CD14-positive monocyte (primary cell): ENCODE measurements at regions of chr20 and their contacts with region 1.

Region 1: DNA sequence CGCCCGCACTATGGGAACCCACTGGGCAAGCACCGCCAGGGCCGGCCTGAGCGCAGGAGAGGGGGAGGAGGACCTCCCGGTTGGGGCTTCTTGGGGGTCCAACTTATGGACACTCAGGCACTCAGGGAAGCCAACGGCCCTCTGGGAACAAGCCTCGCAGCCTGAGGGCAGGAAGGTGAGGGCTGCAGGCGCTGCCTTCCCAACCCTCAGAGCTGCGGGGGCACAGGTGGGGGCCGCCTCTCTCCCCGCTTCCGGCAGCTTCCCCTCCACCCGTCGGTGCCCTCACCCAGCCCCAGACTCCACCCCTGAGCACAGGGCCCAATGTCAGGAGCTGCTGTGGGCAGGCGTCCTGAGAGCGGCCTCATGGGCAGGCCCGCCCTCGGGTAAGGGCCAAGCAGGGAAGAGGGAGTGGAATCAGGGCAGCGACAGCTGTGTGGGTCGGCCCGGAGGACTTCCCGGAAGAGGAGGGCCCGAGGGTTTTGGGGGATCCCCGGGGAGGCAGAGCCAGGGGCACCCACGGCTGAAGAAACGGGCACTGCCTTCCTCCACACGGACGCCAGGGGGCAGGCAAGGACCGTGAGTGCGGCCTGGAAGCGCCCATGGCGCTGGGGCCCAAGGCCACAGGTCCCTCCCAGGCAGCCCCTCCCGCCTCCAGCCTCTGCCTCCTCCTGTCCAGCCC is 488 bp upstream of the PTK6 start:
- DNase-seq: peak; percentile 96 to 98 (median 97)
- H3K4me3 ChIP-seq: peak overlapping the region; percentile 13 to 77 (median 41)
- H3K4me3 Mint-ChIP-seq: peak overlapping the region; percentile 65 to 84
- H3K27ac ChIP-seq: peak overlapping the region; percentile 89 to 90
- H3K27ac Mint-ChIP-seq: peak overlapping the region; percentile 82 to 93 (median 90)
- H3K4me1 ChIP-seq: peaks cover 23 to 28% of the 10 kb centered on the region in 2 donors
- H3K4me1 Mint-ChIP-seq: peaks cover 16% of the 10 kb centered on the region
- H3K27me3 ChIP-seq: peaks cover 0 to 18% of the 10 kb centered on the region in 2 donors
- H3K27me3 Mint-ChIP-seq: peaks cover 9 to 22% (median 13%) of the 10 kb centered on the region in 3 donors
- CTCF ChIP-seq: peak; percentile 96

Region 2: DNA sequence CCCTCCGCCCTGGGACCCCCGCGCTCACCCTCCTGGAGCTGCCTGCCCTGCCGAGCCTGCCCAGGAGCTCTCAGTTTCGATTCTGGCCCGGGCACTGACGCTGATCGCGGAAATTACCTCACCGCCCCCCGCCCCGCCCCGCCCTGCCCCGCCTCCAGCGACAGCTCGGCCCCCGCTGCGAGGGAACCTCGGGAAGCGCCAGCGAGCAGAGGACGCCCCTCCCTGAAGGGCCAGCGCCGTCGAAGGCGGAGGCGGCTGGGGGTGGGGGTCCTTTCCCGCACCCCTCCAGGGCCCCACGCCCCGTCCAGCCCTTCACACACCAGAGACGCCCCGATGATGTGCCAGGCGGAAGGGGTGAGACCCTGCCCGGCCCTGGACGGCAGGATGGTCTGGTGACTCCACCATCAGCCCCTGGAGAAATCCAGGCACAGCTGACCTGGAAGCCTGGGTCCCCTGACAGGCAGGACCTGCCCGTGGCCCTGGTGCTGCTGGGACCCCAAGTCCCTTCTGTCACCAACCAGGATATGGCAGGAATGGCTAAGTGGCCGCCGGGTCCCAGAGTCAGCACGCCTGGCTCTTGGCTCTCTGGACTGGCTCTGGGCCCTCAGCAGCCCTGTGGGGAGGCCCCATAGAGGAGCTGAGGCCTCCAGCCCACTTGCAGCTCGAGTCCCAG is 36.6 kb after region 1 on chr20 and contains the start of gene HELZ2:
- intact Hi-C with region 1: loop called in 1 of 2 experiments (anchors 5 kb)
- DNase-seq: peak; percentile 63 to 77 (median 69)
- H3K4me3 ChIP-seq: peak within 1 kb of the TSS; percentile 76 to 93 (median 92)
- H3K4me3 Mint-ChIP-seq: peak within 1 kb of the TSS; percentile 88 to 92
- H3K27ac ChIP-seq: peak within 1 kb of the TSS; percentile 31 to 80
- H3K27ac Mint-ChIP-seq: peak within 1 kb of the TSS; percentile 85 to 94 (median 87)
- H3K4me1 ChIP-seq: peaks cover 26 to 38% of the 10 kb centered on the region in 2 donors
- H3K4me1 Mint-ChIP-seq: peaks cover 17% of the 10 kb centered on the region
- H3K27me3 ChIP-seq: peaks cover 0 to 59% of the 10 kb centered on the region in 2 donors
- H3K27me3 Mint-ChIP-seq: peaks cover 35 to 79% (median 48%) of the 10 kb centered on the region in 3 donors
- CTCF ChIP-seq: no peak
- polyA plus RNA-seq, gene HELZ2: 3.0 to 15.5 (median 3.3) TPM

Region 3: DNA sequence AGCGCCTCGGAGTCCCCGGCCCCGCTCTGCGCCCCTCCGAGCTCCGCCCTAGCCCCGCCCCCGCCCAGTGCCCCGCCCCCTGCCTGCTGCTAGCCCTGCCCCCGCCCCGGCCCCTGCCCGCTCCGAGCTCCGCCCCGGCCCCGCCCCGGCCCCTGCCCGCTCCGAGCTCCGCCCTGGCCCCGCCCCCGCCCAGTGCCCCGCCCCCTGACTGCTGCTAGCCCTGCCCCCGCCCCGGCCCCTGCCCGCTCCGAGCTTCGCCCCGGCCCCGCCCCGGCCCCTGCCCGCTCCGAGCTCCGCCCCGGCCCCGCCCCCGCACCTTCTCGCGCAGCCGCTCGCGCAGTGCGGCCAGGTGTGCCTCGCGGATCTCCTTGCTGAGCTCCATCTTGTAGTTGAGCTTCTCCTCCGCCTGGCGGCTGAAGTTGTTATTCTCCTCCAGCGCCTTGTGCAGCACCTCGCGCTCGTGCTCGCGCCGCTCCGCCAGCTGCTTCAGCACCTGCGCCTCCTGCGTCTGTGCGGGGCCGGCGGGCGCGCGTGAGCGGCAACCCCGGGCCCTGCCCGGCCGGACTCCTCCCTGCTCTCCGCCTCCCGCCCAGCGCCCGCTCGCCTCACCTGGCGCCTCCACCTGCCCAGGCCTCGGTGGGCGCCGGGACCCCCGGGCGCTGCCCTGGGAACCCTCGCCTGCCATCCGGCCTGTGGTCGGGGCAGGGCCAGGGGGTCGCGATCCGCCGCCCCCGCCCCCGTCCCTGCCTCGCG is 104.3 kb after region 1 on chr20:
- intact Hi-C with region 1: loop called (anchors 1 to 5 kb)
- DNase-seq: peak; percentile 70 to 90 (median 76)
- H3K4me3 ChIP-seq: peak overlapping the region; percentile 74 to 93 (median 82)
- H3K4me3 Mint-ChIP-seq: peak overlapping the region; percentile 72 to 79
- H3K27ac ChIP-seq: peak overlapping the region; percentile 81 to 86
- H3K27ac Mint-ChIP-seq: peak overlapping the region in 5 of 7 donors; percentile 33 to 79 (median 63)
- H3K4me1 ChIP-seq: peaks cover 33 to 40% of the 10 kb centered on the region in 2 donors
- H3K4me1 Mint-ChIP-seq: peaks cover 33% of the 10 kb centered on the region
- H3K27me3 ChIP-seq: no peaks in the 10 kb centered on the region
- H3K27me3 Mint-ChIP-seq: peaks cover 6 to 18% (median 7%) of the 10 kb centered on the region in 3 donors
- CTCF ChIP-seq: peak; percentile 52

Region 4: DNA sequence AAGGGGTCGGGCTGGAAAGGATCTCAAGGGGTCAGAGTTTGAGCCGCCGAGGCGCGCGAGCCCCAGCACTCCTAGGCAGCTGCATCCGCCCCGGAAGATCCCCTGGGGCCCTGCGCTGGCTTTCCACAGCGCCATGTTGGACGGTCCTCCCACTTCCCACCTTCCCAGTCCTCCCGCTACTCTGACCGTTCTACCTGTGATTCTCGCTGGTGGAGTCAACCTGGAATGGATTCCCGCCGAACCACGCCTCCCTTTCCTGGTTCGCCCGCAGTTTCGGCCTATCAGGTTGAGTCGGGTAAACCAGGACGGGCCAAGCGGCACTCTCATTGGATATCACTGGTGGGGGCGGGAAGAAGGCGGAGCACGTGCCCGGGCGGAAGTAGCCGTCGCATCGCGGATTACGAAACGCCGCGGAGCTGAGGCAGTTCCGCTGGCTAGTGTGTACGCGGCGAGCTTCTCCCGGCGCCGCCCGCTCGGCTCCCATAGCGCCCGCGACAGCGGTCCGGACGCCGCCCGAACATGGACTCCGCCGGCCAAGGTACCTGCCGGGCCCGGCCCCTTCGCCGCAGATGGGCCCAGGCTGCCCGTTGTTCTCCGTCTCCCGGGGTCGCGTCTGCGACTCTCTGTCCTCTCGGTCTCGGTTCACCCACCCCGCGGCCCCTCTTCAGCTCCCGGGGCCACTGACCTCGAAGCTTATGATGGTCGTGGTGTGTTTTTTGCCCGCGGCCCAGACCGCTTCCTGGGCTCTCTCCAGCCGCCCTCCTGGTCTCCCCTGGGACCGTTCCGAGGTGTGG is 327.4 kb after region 1 on chr20 and contains the start of gene TPD52L2:
- intact Hi-C with region 1: loop called in 1 of 2 experiments (anchors 10 kb)
- DNase-seq: peak; percentile 98 to 99 (median 99)
- H3K4me3 ChIP-seq: peak within 1 kb of the TSS; percentile 63 to 97 (median 77)
- H3K4me3 Mint-ChIP-seq: peak within 1 kb of the TSS; percentile 92 to 96
- H3K27ac ChIP-seq: peak within 1 kb of the TSS; percentile 99
- H3K27ac Mint-ChIP-seq: peak within 1 kb of the TSS; percentile 97 to 99 (median 98)
- H3K4me1 ChIP-seq: peaks cover 58 to 77% of the 10 kb centered on the region in 2 donors
- H3K4me1 Mint-ChIP-seq: peaks cover 50% of the 10 kb centered on the region
- H3K27me3 ChIP-seq: no peaks in the 10 kb centered on the region
- H3K27me3 Mint-ChIP-seq: peaks cover 0 to 2% (median 0%) of the 10 kb centered on the region in 3 donors
- CTCF ChIP-seq: no peak
- polyA plus RNA-seq, gene TPD52L2: 137 to 167 (median 144) TPM

Region 5: GRCh38 chr20:63980806-63981728 is 443.4 kb after region 1 on chr20 and contains the start of gene PRPF6:
- intact Hi-C with region 1: loop called in 1 of 2 experiments (anchors 5 kb)
- DNase-seq: peak; percentile 96
- H3K4me3 ChIP-seq: peak within 1 kb of the TSS; percentile 65 to 83 (median 76)
- H3K4me3 Mint-ChIP-seq: peak within 1 kb of the TSS; percentile 83 to 92
- H3K27ac ChIP-seq: peak within 1 kb of the TSS; percentile 50 to 89
- H3K27ac Mint-ChIP-seq: peak within 1 kb of the TSS; percentile 82 to 95 (median 91)
- H3K4me1 ChIP-seq: peaks cover 32 to 48% of the 10 kb centered on the region in 2 donors
- H3K4me1 Mint-ChIP-seq: peaks cover 40% of the 10 kb centered on the region
- H3K27me3 ChIP-seq: peaks cover 0 to 5% of the 10 kb centered on the region in 2 donors
- H3K27me3 Mint-ChIP-seq: peaks cover 3 to 11% (median 10%) of the 10 kb centered on the region in 3 donors
- CTCF ChIP-seq: peak; percentile 86
- polyA plus RNA-seq, gene PRPF6: 29.1 to 47.7 (median 34.5) TPM